ENCODE measurements at regions of chr13 and their contacts with region 1.

Region 1: GRCh38 chr13:99322297-99323103 is 15.3 kb upstream of the GPR183 start:
- DNase-seq: peak; percentile 66
- ATAC-seq: peak; percentile 78
- H3K4me3 Mint-ChIP-seq: peak overlapping the region; percentile 26
- H3K27ac Mint-ChIP-seq: peak overlapping the region; percentile 93
- H3K4me1 Mint-ChIP-seq: peaks cover 81% of the 10 kb centered on the region
- H3K27me3 Mint-ChIP-seq: no peaks in the 10 kb centered on the region

Region 2: GRCh38 chr13:99307648-99308339 is 14.7 kb before region 1 on chr13:
- CTCF ChIA-PET with region 1: interaction called, 12 read pairs
- POLR2A ChIA-PET with region 1: interaction called, 28 read pairs
- intact Hi-C with region 1: loop called (anchors 1 to 2 kb)
- DNase-seq: peak; percentile 88
- ATAC-seq: peak; percentile 82
- H3K4me3 Mint-ChIP-seq: peak overlapping the region; percentile 85
- H3K27ac Mint-ChIP-seq: peak overlapping the region; percentile 98
- H3K4me1 Mint-ChIP-seq: peaks cover 73% of the 10 kb centered on the region
- H3K27me3 Mint-ChIP-seq: no peaks in the 10 kb centered on the region

Region 3: GRCh38 chr13:99335603-99336002 is 13.1 kb after region 1 on chr13:
- CTCF ChIA-PET with region 1: interaction called, 7 read pairs
- POLR2A ChIA-PET with region 1: no interaction called
- intact Hi-C with region 1: loop called in 1 of 2 experiments (anchors 1 kb)
- DNase-seq: no peak
- ATAC-seq: peak; percentile 43
- H3K4me3 Mint-ChIP-seq: no peak overlapping the region
- H3K27ac Mint-ChIP-seq: no peak overlapping the region
- H3K4me1 Mint-ChIP-seq: peaks cover 80% of the 10 kb centered on the region
- H3K27me3 Mint-ChIP-seq: no peaks in the 10 kb centered on the region